Mammary epithelial cell (primary cell): ENCODE measurements at regions of chr2 and their contacts with region 1.

Region 1: GRCh38 chr2:505941-506340 is 171.3 kb downstream of the TMEM18 start:
- DNase-seq: no peak
- H3K4me3 ChIP-seq: no peak overlapping the region
- H3K27ac ChIP-seq: no peak overlapping the region
- H3K4me1 ChIP-seq: no peaks in the 10 kb centered on the region
- H3K27me3 ChIP-seq: no peaks in the 10 kb centered on the region
- CTCF ChIP-seq: no peak

Region 2: DNA sequence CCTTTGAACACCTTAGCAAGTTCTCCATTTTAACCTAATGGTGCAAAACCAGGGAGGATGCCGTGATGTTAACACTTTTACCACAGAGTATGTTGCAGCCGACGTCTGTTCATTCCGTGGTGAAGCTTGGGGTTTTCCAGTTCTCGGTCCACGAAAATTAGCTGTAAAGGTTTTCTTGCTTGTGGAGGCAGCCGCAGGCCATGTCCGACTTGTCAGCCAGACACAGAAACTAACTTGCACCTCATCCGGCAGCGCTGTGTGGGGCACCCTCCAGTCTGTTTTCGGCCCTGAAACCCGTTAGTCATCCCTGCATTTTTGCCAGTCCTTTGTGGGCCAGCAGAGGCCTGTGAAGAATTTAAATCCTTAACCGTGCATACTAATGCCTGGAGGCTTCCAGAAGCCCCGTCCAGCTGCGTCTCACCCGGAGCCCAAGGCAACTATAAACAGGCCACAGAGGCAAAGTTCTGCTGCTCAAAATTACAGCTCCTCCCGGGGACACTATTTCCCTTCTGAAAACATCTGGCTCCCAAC is 312.7 kb before region 1 on chr2:
- CTCF ChIA-PET with region 1: no interaction called
- dilution Hi-C with region 1: no loop called
- in situ Hi-C with region 1: no loop called
- intact Hi-C with region 1: no loop called
- DNase-seq: peak; percentile 6
- H3K4me3 ChIP-seq: no peak overlapping the region
- H3K27ac ChIP-seq: peak overlapping the region; percentile 47
- H3K4me1 ChIP-seq: peaks cover 4% of the 10 kb centered on the region
- H3K27me3 ChIP-seq: no peaks in the 10 kb centered on the region
- CTCF ChIP-seq: no peak

Region 3: DNA sequence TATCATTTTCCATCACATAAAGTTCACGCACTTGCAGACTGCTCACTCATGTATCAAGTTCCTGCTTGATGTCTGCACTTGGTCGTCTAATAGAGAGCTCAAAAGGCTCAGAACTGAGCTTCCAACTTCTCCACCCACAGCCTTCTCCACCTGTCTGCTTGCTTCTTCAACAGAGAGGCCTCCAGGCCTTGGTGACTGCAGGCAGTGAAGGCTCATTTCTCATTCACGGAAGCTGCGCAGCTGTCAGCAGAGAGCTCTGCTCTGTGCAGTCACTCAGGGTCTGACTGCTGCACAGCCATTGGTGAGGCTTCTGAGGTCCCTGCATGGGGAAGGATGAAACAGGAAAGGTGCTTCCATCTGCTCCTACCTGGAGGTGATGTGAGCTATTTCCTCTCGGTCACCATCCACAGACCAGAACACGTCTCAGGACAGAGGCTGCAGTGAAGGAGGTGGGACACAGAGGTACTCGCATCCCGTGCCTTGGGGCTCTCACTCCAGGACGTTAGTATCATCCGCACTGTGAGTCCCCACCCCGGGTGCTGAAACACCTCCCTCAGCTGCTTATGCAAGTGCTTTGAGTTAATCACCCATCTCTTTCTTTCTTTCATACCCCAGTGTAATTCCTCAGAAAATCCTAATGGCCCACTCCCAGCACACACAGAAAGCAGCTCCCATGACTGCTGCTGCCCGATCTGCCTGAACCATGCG is 45.1 kb after region 1 on chr2:
- CTCF ChIA-PET with region 1: no interaction called
- dilution Hi-C with region 1: no loop called
- in situ Hi-C with region 1: no loop called
- intact Hi-C with region 1: no loop called
- DNase-seq: no peak
- H3K4me3 ChIP-seq: no peak overlapping the region
- H3K27ac ChIP-seq: no peak overlapping the region
- H3K4me1 ChIP-seq: no peaks in the 10 kb centered on the region
- H3K27me3 ChIP-seq: no peaks in the 10 kb centered on the region
- CTCF ChIP-seq: no peak

Region 4: GRCh38 chr2:584863-585823 is 79.2 kb after region 1 on chr2:
- CTCF ChIA-PET with region 1: no interaction called
- dilution Hi-C with region 1: loop called (anchors 5 kb)
- in situ Hi-C with region 1: no loop called
- intact Hi-C with region 1: no loop called
- DNase-seq: no peak
- H3K4me3 ChIP-seq: no peak overlapping the region
- H3K27ac ChIP-seq: no peak overlapping the region
- H3K4me1 ChIP-seq: no peaks in the 10 kb centered on the region
- H3K27me3 ChIP-seq: no peaks in the 10 kb centered on the region
- CTCF ChIP-seq: no peak